Activated CD4-positive, alpha-beta memory T cell treated with anti-CD3 and anti-CD28 coated beads, Interleukin-2, amount 10 ng/mL, durations not matched to agents 7 days and 5 days (primary cell): ENCODE measurements at regions of chr12 and their contacts with region 1.

Region 1: DNA sequence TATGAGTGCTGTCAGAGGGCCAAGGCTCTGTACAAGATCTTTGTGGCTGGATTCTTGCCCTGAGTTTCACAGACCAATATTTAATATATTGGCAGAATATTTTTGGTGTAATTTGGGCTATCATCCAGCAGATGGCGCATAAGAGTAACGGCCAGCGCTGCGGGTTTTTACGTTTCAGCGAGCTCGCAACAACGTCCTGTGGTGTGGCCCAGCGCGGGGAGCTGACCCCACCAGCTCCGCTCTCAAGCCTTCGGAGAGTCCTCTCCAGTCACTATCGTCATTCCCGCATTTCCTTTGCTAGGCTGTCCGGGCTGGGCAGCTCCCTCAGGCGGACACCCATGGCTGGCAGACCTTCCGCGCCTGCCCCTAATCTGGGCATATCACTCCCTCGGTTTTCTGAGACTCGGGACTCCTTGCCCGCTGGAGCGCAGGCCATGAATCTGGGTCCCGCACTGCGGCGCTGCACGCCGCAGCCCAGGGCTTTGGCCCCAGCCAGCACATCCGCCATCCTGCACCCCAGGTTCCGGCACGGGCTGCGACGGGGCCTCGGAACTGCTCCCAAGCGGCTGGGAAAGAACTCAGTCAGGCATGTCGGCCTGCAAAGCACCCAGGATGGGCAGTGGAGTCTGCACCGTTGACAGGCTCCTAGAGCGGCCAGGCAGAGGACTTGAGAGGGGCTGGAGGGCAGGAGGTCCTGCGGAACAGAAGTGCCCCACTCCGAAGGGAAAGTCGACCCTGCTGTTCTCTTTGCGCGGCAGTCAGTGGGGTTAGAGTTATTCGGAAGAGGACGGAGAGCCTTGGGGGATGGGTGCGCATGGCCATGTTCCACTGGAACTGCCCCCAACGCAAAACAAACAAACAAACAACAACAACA is 18.4 kb downstream of the OLR1 start:
- DNase-seq: peak; percentile 57
- H3K4me3 Mint-ChIP-seq: peak overlapping the region; percentile 76
- H3K27ac Mint-ChIP-seq: no peak overlapping the region
- H3K4me1 Mint-ChIP-seq: peaks cover 12% of the 10 kb centered on the region
- H3K27me3 Mint-ChIP-seq: peaks cover 41% of the 10 kb centered on the region

Region 2: DNA sequence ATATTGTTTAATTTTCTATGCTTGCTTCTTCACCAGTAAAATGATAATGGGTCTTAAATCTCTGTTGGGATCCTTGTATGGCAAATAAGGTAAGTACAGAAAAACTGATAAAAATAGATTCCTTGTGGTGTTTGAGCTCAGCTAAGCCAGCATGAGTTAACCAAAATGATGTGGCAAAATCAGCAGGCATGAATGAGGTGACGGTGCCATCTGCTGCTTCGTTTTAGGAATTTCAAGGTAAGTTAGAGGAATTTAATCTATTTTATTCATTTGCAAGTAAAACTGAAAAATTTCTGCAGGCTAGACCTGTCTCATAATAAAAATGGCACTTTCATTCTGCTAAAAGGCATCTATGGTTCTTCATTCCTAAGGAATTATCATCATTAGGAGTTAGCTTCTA is 13.5 kb before region 1 on chr12:
- CTCF ChIA-PET with region 1: interaction called, 12 read pairs
- POLR2A ChIA-PET with region 1: no interaction called
- DNase-seq: peak; percentile 54
- H3K4me3 Mint-ChIP-seq: no peak overlapping the region
- H3K27ac Mint-ChIP-seq: no peak overlapping the region
- H3K4me1 Mint-ChIP-seq: no peaks in the 10 kb centered on the region
- H3K27me3 Mint-ChIP-seq: peaks cover 18% of the 10 kb centered on the region

Region 3: DNA sequence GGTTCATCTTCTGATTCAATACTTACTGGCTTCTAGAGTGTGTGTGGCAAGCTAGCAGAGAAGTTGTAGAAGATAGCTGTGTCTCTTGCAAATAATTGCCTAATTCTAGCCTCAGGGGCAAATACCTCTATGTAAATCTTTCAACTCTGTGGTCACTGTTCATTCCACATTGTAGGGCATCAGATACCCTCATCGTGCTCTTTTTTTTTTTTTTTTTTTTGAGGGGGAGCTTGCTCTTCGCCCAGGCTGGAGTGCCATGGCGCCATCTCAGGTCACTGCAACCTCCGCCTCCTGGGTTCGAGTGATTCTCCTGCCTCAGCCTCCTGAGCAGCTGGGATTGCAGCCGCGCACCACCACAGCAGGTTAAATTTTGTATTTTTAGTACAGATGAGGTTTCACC is 16.8 kb after region 1 on chr12:
- CTCF ChIA-PET with region 1: interaction called, 10 read pairs
- POLR2A ChIA-PET with region 1: no interaction called
- DNase-seq: no peak
- H3K4me3 Mint-ChIP-seq: no peak overlapping the region
- H3K27ac Mint-ChIP-seq: no peak overlapping the region
- H3K4me1 Mint-ChIP-seq: no peaks in the 10 kb centered on the region
- H3K27me3 Mint-ChIP-seq: peaks cover 33% of the 10 kb centered on the region

Region 4: GRCh38 chr12:10182354-10183061 is 29.0 kb after region 1 on chr12:
- CTCF ChIA-PET with region 1: no interaction called
- POLR2A ChIA-PET with region 1: no interaction called
- DNase-seq: no peak
- H3K4me3 Mint-ChIP-seq: no peak overlapping the region
- H3K27ac Mint-ChIP-seq: no peak overlapping the region
- H3K4me1 Mint-ChIP-seq: no peaks in the 10 kb centered on the region
- H3K27me3 Mint-ChIP-seq: peaks cover 41% of the 10 kb centered on the region

Region 5: GRCh38 chr12:10339053-10339840 is 185.7 kb after region 1 on chr12:
- CTCF ChIA-PET with region 1: no interaction called
- POLR2A ChIA-PET with region 1: no interaction called
- DNase-seq: no peak
- H3K4me3 Mint-ChIP-seq: no peak overlapping the region
- H3K27ac Mint-ChIP-seq: no peak overlapping the region
- H3K4me1 Mint-ChIP-seq: peaks cover 5% of the 10 kb centered on the region
- H3K27me3 Mint-ChIP-seq: peaks cover 20% of the 10 kb centered on the region

Region 6: DNA sequence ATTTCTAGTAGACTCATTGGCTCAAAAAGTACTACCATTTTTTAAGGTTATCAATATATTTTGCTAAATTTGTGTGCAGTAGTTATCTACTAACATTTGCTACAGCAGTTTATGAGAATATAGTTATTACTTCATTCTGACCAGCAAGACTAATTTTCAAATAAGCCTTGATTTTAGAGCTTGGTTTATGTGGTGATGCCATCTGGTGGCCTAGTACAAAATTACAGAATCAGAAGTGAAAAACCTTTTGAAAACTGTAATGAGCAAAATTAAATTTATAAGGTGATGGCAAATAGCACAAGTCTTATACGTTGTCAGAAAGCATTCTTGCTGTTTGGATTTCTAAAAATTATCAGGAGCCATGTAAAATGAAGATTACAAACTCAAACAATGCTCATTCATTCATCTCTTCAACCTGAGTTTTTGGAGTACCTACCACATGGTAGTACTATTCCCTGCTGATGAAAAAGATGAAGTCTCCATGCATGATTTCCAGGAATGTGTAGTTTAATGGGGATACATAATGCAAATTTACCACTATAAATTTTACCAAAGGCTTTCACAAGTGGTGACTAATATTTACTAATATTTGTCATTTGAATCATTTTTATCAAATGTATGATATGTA is 408.9 kb after region 1 on chr12:
- CTCF ChIA-PET with region 1: interaction called, 13 read pairs
- POLR2A ChIA-PET with region 1: no interaction called
- DNase-seq: no peak
- H3K4me3 Mint-ChIP-seq: no peak overlapping the region
- H3K27ac Mint-ChIP-seq: no peak overlapping the region
- H3K4me1 Mint-ChIP-seq: no peaks in the 10 kb centered on the region
- H3K27me3 Mint-ChIP-seq: peaks cover 38% of the 10 kb centered on the region